ENCODE measurements at regions of chr10 and their contacts with region 1.

Region 1: GRCh38 chr10:79929409-79929904 is 19.4 kb downstream of the SFTPD start:
- DNase-seq: peak; percentile 42 to 80 (median 71)
- ATAC-seq: peak; percentile 34
- H3K4me3 ChIP-seq: no peak overlapping the region
- H3K4me3 Mint-ChIP-seq: no peak overlapping the region
- H3K27ac ChIP-seq: no peak overlapping the region
- H3K27ac Mint-ChIP-seq: no peak overlapping the region
- H3K4me1 ChIP-seq: no peaks in the 10 kb centered on the region
- H3K4me1 Mint-ChIP-seq: peaks cover 3% of the 10 kb centered on the region
- H3K27me3 ChIP-seq: no peaks in the 10 kb centered on the region
- H3K27me3 Mint-ChIP-seq: peaks cover 29% of the 10 kb centered on the region
- CTCF ChIP-seq: peak; percentile 35

Region 2: GRCh38 chr10:79562135-79562756 is 367.2 kb before region 1 on chr10:
- CTCF ChIA-PET with region 1: no interaction called
- POLR2A ChIA-PET with region 1: no interaction called
- intact Hi-C with region 1: loop called in 1 of 2 experiments (anchors 1 kb)
- DNase-seq: peak; percentile 18 to 73 (median 51)
- ATAC-seq: peak; percentile 51
- H3K4me3 ChIP-seq: no peak overlapping the region
- H3K4me3 Mint-ChIP-seq: no peak overlapping the region
- H3K27ac ChIP-seq: no peak overlapping the region
- H3K27ac Mint-ChIP-seq: no peak overlapping the region
- H3K4me1 ChIP-seq: no peaks in the 10 kb centered on the region
- H3K4me1 Mint-ChIP-seq: peaks cover 2% of the 10 kb centered on the region
- H3K27me3 ChIP-seq: peaks cover 0 to 2% of the 10 kb centered on the region in 2 experiments
- H3K27me3 Mint-ChIP-seq: peaks cover 28% of the 10 kb centered on the region
- CTCF ChIP-seq: peak; percentile 60

Region 3: GRCh38 chr10:80070057-80070456 is 140.6 kb after region 1 on chr10:
- CTCF ChIA-PET with region 1: no interaction called
- POLR2A ChIA-PET with region 1: no interaction called
- intact Hi-C with region 1: no loop called
- DNase-seq: no peak
- ATAC-seq: no peak
- H3K4me3 ChIP-seq: no peak overlapping the region
- H3K4me3 Mint-ChIP-seq: no peak overlapping the region
- H3K27ac ChIP-seq: no peak overlapping the region
- H3K27ac Mint-ChIP-seq: no peak overlapping the region
- H3K4me1 ChIP-seq: no peaks in the 10 kb centered on the region
- H3K4me1 Mint-ChIP-seq: no peaks in the 10 kb centered on the region
- H3K27me3 ChIP-seq: no peaks in the 10 kb centered on the region
- H3K27me3 Mint-ChIP-seq: no peaks in the 10 kb centered on the region
- CTCF ChIP-seq: no peak

Region 4: GRCh38 chr10:80205478-80206276 is 276.2 kb after region 1 on chr10 and contains the start of gene ANXA11:
- CTCF ChIA-PET with region 1: no interaction called
- POLR2A ChIA-PET with region 1: no interaction called
- intact Hi-C with region 1: no loop called
- DNase-seq: peak; percentile 70 to 93 (median 87)
- ATAC-seq: peak; percentile 82
- H3K4me3 ChIP-seq: peak within 1 kb of the TSS; percentile 67 to 70
- H3K4me3 Mint-ChIP-seq: peak within 1 kb of the TSS; percentile 96
- H3K27ac ChIP-seq: peak within 1 kb of the TSS; percentile 72 to 82
- H3K27ac Mint-ChIP-seq: peak within 1 kb of the TSS; percentile 94
- H3K4me1 ChIP-seq: peaks cover 49% of the 10 kb centered on the region
- H3K4me1 Mint-ChIP-seq: peaks cover 54% of the 10 kb centered on the region
- H3K27me3 ChIP-seq: no peaks in the 10 kb centered on the region
- H3K27me3 Mint-ChIP-seq: no peaks in the 10 kb centered on the region
- CTCF ChIP-seq: no peak
- total RNA-seq, gene ANXA11: 136 to 141 TPM